Right ventricle myocardium inferior (tissue), 1 donor: ENCODE measurements at regions of chr13 and their contacts with region 1.

Region 1: GRCh38 chr13:49840266-49840665 is 47.8 kb upstream of the KPNA3 start:
- DNase-seq: no peak
- ATAC-seq: no peak

Region 2: DNA sequence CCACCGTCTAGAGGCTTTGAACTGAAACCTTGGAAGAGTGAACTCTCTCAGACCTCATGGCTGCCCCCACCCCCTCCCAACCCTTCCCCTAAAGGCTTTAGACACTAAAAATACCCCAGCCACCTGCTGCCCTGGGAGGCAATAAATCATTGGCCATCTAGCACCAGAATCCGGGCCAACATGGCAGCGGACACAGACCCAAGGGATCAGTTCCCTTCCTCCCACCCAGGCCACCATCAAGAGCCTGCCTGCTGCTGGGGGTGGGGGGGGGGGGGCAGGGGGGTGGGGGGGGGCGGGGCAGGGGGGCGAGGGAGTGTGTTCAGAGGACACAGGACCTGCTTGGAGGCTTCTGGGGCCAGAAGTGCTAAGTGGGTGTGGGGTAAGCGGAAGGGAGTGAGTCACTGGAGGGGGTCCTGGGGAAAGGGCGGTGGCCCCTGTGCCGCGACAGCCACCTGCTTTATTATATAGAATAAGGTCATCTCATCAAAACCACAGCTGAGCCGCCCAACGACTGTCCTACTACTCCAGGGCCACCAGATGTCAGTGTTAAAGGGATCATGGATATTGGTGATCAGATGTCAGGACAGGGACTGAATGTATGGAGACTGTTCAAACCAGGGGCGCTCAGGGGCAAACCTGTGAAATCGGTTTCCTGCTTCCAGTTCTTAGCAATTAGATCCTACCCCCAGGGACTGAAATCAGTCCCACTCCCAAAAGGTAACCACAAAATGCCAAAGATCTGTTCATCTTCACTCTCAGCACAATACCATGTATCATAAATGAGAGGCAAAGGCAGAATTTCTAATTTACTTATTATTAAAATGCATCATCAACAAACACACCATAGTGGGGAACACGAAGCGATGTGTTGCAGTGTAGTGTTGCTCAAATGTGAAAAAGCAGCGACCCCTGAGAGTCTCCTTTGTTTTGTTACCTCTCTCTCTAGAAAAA is 187.6 kb before region 1 on chr13:
- intact Hi-C with region 1: loop called (anchors 5 kb)
- DNase-seq: no peak
- ATAC-seq: peak; percentile 62